ENCODE measurements at regions of chr9 and their contacts with region 1.

Region 1: DNA sequence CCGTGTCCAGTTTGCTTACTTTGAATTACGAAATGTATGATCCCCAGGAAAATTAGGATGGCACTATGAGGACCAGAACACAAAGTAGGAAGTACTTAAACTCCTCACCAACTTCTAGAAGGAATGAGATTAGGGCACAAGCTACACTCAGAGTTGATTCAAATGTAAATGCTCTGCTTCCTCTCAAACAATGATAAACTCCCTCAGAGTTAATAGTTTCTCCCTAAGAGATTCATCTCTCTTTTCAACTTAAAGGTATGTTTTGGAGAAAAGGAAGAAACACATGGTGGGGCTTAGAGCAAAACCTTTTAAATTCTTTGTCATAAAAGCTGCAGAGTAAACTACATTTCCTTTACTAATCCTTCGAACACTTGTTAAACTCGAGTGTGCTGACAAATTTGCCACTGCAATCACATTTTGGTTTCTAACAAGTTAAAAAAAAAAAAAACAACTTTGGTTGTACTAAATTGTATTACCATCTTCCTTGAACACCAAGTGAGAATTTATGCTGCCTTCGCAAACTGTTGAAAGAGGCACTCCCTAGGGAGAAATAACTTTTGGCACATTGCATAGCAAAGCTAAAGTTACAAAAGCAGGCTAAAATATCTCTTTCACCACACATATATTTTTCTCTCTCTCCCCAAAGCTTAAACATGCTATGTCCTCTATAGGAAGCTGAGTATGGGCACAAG is 66.6 kb downstream of the DENND1A start:
- DNase-seq: no peak
- ATAC-seq: peak; percentile 54

Region 2: GRCh38 chr9:123927625-123928532 is 64.6 kb after region 1 on chr9:
- intact Hi-C with region 1: no loop called
- DNase-seq: no peak
- ATAC-seq: peak; percentile 57

Region 3: DNA sequence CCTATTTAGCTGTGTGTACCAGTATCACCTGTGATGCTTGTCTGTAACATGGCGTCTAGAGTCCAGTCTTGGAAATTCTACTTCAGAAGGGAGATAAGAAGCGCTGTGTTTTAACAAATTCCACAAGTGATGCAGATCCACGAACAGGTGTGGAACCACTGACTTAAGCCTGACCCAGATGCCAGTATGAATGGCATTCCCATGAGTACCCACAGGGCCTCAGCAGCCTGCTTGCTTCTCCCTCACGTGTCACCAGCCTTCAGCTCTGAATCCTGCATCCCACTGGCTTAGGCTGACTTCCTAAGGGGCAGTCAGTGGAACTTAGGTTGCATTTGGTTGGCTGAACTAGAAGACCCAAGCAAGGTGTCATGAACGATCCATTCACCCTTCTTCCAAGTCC is 75.1 kb after region 1 on chr9:
- intact Hi-C with region 1: loop called (anchors 5 kb)
- DNase-seq: no peak
- ATAC-seq: no peak

Region 4: DNA sequence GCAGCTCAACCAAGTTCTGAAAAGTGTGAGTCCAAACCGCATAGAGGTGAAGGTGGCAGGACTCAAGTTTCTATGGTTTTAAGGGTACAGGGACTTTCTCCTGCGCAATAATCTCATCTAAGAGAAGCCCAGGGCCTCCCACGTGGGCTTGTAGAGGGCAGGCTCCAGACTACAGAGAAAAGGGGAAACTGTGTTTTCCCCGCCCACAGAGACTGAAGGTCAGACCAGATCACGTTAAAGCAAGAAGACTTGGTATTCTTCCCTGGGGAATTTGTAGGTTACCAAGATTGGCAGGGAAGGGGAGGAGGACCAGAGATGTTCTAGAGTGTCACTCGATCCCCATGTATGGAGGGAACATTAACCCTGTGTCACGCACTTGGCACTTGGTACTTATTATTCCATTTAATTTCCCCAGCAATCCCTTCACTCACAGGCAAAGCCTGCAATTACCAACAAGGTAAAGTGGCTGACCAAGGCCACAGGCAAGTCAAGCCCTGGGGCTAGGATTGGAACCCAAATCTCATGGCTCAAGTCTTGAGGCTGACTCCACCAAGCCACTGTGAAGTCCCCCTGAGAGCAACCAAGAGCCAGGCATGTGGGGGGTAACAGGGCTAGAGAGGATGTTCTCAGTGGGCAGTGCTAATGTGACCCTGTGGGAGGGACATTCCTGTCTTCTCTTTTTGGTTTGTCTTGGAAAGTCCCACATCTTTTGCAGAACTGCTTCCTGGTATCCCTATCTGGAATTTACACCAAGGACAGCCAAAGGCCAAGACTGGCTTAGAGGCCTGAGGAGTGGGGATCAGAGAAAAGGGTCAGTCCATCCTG is 376.2 kb after region 1 on chr9:
- intact Hi-C with region 1: loop called (anchors 10 kb)
- DNase-seq: peak; percentile 57
- ATAC-seq: peak; percentile 41

Measured in sciatic nerve (tissue), 2 donors.